ENCODE measurements at regions of chr6 and their contacts with region 1.

Region 1: DNA sequence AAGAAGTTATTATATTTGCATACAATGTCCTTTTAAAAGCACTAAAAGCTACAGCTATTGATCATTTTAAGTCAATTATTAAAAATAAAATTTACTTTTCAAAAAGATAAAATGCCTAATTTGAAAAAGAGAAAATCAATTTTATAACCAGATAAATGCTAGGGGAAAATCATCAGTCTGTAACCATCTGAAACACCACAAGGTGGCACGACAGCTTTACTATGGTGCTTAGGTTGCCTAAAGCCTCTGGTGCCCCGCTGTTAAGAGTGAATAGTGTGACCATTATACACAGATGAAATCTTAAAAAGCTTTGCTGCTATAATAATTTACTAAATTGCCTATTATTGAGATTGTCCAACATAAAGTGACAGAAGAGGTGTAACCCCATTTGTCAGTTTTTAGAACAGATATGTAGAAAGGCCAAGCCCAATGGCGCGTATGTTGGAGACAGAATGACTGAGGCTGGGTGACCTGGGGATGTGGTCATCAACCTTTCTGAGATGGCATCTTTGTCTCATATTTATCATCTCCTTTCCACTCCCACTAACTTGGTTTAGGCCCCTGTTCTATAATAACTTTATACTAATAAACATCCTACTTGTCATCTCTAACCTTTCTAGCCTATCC is 100.8 kb downstream of the MOXD1 start:
- DNase-seq: peak; percentile 75
- ATAC-seq: peak; percentile 90
- H3K4me3 ChIP-seq: no peak overlapping the region
- H3K27ac ChIP-seq: no peak overlapping the region
- H3K4me1 ChIP-seq: no peaks in the 10 kb centered on the region; the same call in 1 of the 2 replicates
- H3K27me3 ChIP-seq: no peaks in the 10 kb centered on the region
- CTCF ChIP-seq: peak; percentile 83
- POLR2A ChIP-seq: no peak
- RAD21 ChIP-seq: peak; percentile 90

Region 2: GRCh38 chr6:131923356-131923755 is 377.1 kb before region 1 on chr6:
- CTCF ChIA-PET with region 1: no interaction called
- POLR2A ChIA-PET with region 1: no interaction called
- dilution Hi-C with region 1: no loop called
- in situ Hi-C with region 1: no loop called
- intact Hi-C with region 1: loop called (anchors 1 kb)
- DNase-seq: peak; percentile 57
- ATAC-seq: no peak
- H3K4me3 ChIP-seq: no peak overlapping the region
- H3K27ac ChIP-seq: no peak overlapping the region
- H3K4me1 ChIP-seq: no peaks in the 10 kb centered on the region
- H3K27me3 ChIP-seq: no peaks in the 10 kb centered on the region
- CTCF ChIP-seq: peak; percentile 49
- POLR2A ChIP-seq: no peak
- RAD21 ChIP-seq: peak; percentile 62

Region 3: GRCh38 chr6:132289756-132290155 is 10.7 kb before region 1 on chr6:
- CTCF ChIA-PET with region 1: interaction called, 14 read pairs
- POLR2A ChIA-PET with region 1: no interaction called
- dilution Hi-C with region 1: no loop called
- in situ Hi-C with region 1: no loop called
- intact Hi-C with region 1: no loop called
- DNase-seq: no peak
- ATAC-seq: no peak
- H3K4me3 ChIP-seq: no peak overlapping the region
- H3K27ac ChIP-seq: no peak overlapping the region
- H3K4me1 ChIP-seq: no peaks in the 10 kb centered on the region
- H3K27me3 ChIP-seq: no peaks in the 10 kb centered on the region; the same call in 1 of the 2 replicates
- CTCF ChIP-seq: no peak
- POLR2A ChIP-seq: no peak
- RAD21 ChIP-seq: no peak

Region 4: GRCh38 chr6:132391391-132392271 is 91.2 kb after region 1 on chr6:
- CTCF ChIA-PET with region 1: interaction called, 4 read pairs
- POLR2A ChIA-PET with region 1: no interaction called
- dilution Hi-C with region 1: no loop called
- in situ Hi-C with region 1: no loop called
- intact Hi-C with region 1: loop called (anchors 2 kb)
- DNase-seq: peak; percentile 96
- ATAC-seq: peak; percentile 93
- H3K4me3 ChIP-seq: no peak overlapping the region; the same call in 1 of the 2 replicates
- H3K27ac ChIP-seq: peak overlapping the region; percentile 93
- H3K4me1 ChIP-seq: peaks cover 14% of the 10 kb centered on the region
- H3K27me3 ChIP-seq: no peaks in the 10 kb centered on the region
- CTCF ChIP-seq: no peak
- POLR2A ChIP-seq: no peak
- RAD21 ChIP-seq: no peak

Region 5: DNA sequence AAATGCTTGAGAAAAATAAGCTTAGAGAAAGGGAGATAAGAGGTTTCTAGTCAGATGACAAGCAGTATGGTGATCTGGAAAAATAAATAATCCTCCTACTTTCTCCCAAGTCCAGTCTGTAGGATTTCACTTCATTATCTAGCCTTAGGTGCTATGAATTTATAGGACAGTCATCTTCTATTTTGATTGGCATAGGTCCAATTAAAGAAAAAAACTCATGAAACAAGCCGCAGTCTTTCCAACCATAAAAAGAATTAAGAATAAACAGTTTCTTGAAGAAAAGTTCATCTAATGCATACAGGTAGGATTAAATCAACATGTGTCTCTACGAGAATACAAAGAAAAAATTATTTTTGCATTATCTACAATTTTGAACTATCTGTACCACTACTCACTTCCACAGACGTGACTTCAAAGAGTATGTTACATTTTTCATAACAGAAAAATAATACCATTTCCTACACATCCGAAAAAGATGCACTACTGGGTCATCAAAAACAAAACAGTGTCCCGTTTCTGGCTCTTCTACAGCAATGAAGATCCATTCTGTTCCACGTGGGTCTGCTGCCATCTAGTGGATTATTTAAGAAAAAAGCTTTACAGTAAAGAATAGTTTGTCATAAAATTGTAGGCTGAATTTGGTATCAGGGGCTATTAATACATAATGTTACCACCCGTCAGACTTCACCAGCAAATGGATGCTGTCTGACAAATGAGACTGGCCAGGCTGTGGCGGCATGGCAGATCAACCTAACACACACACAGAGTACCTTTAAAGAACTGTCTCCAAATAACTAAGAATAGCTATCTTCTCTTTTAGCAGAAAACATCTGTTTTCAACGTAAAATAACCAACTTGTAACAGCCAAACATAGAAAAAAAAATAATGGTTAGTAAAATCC is 183.6 kb after region 1 on chr6:
- CTCF ChIA-PET with region 1: interaction called, 33 read pairs
- POLR2A ChIA-PET with region 1: no interaction called
- dilution Hi-C with region 1: loop called (anchors 25 kb)
- in situ Hi-C with region 1: loop called (anchors 10 kb)
- intact Hi-C with region 1: loop called (anchors 1 kb)
- DNase-seq: peak; percentile 76
- ATAC-seq: peak; percentile 84
- H3K4me3 ChIP-seq: no peak overlapping the region
- H3K27ac ChIP-seq: no peak overlapping the region
- H3K4me1 ChIP-seq: no peaks in the 10 kb centered on the region; the same call in 1 of the 2 replicates
- H3K27me3 ChIP-seq: no peaks in the 10 kb centered on the region
- CTCF ChIP-seq: peak; percentile 87
- POLR2A ChIP-seq: 0 out of 2 replicates have a peak, but pooled peaks have one; percentile 23
- RAD21 ChIP-seq: peak; percentile 91

Region 6: DNA sequence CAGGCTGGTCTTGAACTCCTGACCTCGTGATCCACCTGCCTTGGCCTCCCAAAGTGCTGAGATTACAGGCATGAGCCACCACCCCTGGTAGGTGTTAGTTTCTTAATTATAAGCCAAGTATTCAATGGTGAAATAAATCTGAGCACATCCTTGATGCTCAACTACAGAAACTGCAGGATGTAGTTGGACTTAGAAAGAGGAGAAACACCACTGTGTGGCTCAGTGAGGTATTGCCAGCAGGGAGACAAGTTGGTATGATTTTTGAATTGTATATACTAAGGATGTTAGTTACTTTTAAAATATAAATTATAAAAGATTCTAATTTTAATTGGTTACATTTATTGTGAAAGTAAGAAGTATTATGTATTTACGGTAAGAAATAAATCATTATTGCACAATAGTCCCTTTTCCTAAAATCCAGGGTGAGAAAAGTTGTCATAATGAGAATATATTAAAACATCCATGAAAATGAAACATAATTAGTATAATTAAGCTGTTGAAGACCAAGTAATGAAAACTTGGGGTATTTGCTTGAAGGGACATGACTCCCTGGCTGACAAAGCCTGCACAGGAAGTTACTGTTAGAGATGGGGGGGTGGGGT is 480.4 kb after region 1 on chr6:
- CTCF ChIA-PET with region 1: no interaction called
- POLR2A ChIA-PET with region 1: no interaction called
- dilution Hi-C with region 1: no loop called
- in situ Hi-C with region 1: no loop called
- intact Hi-C with region 1: loop called (anchors 10 kb)
- DNase-seq: peak; percentile 63
- ATAC-seq: peak; percentile 81
- H3K4me3 ChIP-seq: no peak overlapping the region
- H3K27ac ChIP-seq: no peak overlapping the region
- H3K4me1 ChIP-seq: no peaks in the 10 kb centered on the region
- H3K27me3 ChIP-seq: no peaks in the 10 kb centered on the region
- CTCF ChIP-seq: peak; percentile 62
- POLR2A ChIP-seq: no peak
- RAD21 ChIP-seq: peak; percentile 59

Region 7: DNA sequence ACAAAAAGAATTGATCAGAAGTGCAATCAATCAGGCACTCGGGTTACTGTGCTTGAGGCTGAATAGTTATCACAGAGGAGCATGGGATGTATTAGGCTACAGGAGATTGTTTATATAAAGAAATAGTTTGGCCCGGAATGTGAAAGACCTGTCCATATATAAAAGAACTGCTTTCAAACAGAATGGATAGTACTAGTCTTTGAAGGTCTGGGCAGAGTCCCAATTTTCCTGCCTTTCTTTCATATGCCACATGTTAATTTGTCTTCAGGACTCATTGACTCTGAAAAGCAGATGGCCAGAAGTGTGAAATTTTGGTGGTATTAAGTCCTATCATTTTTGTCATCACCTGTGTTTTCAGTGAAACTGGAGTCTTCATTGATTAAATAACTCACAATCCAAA is 1255.2 kb after region 1 on chr6:
- CTCF ChIA-PET with region 1: no interaction called
- POLR2A ChIA-PET with region 1: no interaction called
- dilution Hi-C with region 1: no loop called
- in situ Hi-C with region 1: no loop called
- intact Hi-C with region 1: no loop called
- DNase-seq: peak; percentile 24
- ATAC-seq: no peak
- H3K4me3 ChIP-seq: no peak overlapping the region
- H3K27ac ChIP-seq: no peak overlapping the region
- H3K4me1 ChIP-seq: peaks cover 10% of the 10 kb centered on the region
- H3K27me3 ChIP-seq: no peaks in the 10 kb centered on the region
- CTCF ChIP-seq: no peak
- POLR2A ChIP-seq: no peak
- RAD21 ChIP-seq: no peak

Measured in IMR-90 (cell line).